Mammary epithelial cell (primary cell): ENCODE measurements at regions of chr21 and their contacts with region 1.

Region 1: DNA sequence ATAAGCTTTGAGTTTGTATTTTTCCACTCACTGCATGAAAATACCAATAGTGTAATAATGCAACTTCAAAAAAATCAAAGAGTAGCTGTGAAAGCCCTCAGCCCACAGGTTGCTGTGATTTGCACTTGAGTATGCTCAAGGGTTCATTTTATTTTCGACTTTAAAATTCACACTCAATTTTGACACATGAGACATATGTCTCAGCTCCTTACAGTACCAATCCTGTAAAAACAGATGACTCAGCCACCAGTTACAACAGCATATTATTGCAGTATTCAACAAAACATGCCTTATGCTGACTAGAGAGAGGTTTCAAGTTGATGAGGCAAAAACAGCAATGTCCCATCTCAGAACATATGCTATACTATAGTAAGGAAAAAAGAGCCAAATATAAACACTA is 66.1 kb downstream of the CYYR1 start:
- DNase-seq: peak; percentile 86
- H3K4me3 ChIP-seq: no peak overlapping the region
- H3K27ac ChIP-seq: no peak overlapping the region
- H3K4me1 ChIP-seq: peaks cover 15% of the 10 kb centered on the region
- H3K27me3 ChIP-seq: no peaks in the 10 kb centered on the region
- CTCF ChIP-seq: no peak

Region 2: DNA sequence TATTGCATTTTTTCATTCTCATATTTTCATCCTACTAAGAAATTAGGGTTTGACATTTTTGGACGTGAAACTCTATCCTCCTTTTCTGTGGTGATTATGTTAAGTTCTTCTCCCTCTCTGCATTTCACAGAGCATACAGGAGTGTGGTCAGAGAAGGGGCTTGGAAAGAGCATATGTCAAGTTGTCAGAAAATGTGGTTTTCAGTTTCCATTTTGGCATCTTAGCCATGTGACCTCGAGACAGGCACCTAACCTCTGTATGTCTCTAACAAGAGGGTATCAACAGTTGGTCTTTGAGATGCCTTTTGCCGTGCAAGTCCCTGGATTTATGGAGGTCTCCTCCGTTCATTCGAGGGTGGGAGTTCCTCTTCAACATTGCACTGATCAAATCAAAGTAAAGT is 74.5 kb before region 1 on chr21:
- CTCF ChIA-PET with region 1: no interaction called
- dilution Hi-C with region 1: loop called (anchors 5 kb)
- in situ Hi-C with region 1: no loop called
- intact Hi-C with region 1: no loop called
- DNase-seq: no peak
- H3K4me3 ChIP-seq: no peak overlapping the region
- H3K27ac ChIP-seq: no peak overlapping the region
- H3K4me1 ChIP-seq: no peaks in the 10 kb centered on the region
- H3K27me3 ChIP-seq: no peaks in the 10 kb centered on the region
- CTCF ChIP-seq: no peak